Kidney (tissue), 22 donors: ENCODE measurements at regions of chr17 and their contacts with region 1.

Region 1: GRCh38 chr17:73156166-73156840 is 8.5 kb upstream of the SSTR2 start:
- DNase-seq: peak; percentile 72 to 84 (median 78)
- H3K4me3 ChIP-seq: no peak overlapping the region
- H3K27ac ChIP-seq: peak overlapping the region in 1 of 2 donors; percentile 28
- H3K4me1 ChIP-seq: peaks cover 0 to 12% (median 7%) of the 10 kb centered on the region in 3 donors
- H3K27me3 ChIP-seq: no peaks in the 10 kb centered on the region
- CTCF ChIP-seq: peak; percentile 74

Region 2: GRCh38 chr17:72985881-72986720 is 170.2 kb before region 1 on chr17:
- intact Hi-C with region 1: loop called (anchors 10 kb)
- DNase-seq: peak in 4 of 5 donors; percentile 76 to 87 (median 82)
- H3K4me3 ChIP-seq: no peak overlapping the region
- H3K27ac ChIP-seq: no peak overlapping the region
- H3K4me1 ChIP-seq: no peaks in the 10 kb centered on the region
- H3K27me3 ChIP-seq: no peaks in the 10 kb centered on the region
- CTCF ChIP-seq: peak; percentile 81

Region 3: GRCh38 chr17:73052923-73053322 is 103.4 kb before region 1 on chr17:
- intact Hi-C with region 1: no loop called
- DNase-seq: peak in 1 of 5 donors; percentile 27
- H3K4me3 ChIP-seq: no peak overlapping the region
- H3K27ac ChIP-seq: peak overlapping the region in 1 of 2 donors; percentile 43
- H3K4me1 ChIP-seq: peaks cover 0 to 5% (median 0%) of the 10 kb centered on the region in 3 donors
- H3K27me3 ChIP-seq: no peaks in the 10 kb centered on the region
- CTCF ChIP-seq: no peak